Activated CD8-positive, alpha-beta T cell treated with anti-CD3 and anti-CD28 coated beads, Interleukin-2, amount 10 ng/mL, durations not matched to agents 7 days and 5 days (primary cell): ENCODE measurements at regions of chr9 and their contacts with region 1.

Region 1: DNA sequence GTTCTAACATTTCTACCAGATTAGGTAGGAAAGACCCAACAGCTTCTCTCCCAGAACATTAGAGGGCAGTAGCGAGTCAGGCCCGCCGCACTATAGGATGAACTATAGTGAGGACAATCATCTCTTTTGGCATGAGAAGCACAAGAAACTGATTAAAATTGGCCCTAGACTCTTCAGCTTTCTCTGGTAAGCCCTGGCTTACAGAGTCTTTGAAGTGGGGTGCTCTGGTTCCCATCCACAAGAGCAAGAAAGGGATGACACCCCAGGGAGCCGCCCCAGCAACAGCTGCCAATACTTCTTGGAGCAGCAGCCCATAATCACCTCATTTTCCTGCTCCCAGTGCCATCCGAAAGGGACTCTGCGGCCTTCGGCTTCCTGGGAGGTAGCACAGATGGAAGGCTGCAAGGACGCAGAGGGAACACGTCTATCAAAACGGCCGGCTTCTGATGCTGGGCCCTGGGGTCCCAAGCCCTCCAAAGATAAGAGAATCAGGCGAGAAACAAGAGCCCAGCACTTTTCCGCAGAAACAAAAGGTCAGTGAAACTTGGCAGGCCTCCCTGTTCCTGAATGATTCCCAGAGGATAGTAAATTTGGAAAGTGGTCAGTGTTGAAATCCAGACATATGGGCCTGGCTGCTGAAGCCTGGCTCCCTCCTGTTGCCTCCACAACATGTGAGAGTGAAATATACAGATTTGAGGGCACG is 69.3 kb downstream of the HSD17B3 start:
- DNase-seq: peak; percentile 45
- ATAC-seq: peak; percentile 73
- H3K4me3 Mint-ChIP-seq: no peak overlapping the region
- H3K27ac Mint-ChIP-seq: no peak overlapping the region
- H3K4me1 Mint-ChIP-seq: no peaks in the 10 kb centered on the region
- H3K27me3 Mint-ChIP-seq: peaks cover 54% of the 10 kb centered on the region

Region 2: DNA sequence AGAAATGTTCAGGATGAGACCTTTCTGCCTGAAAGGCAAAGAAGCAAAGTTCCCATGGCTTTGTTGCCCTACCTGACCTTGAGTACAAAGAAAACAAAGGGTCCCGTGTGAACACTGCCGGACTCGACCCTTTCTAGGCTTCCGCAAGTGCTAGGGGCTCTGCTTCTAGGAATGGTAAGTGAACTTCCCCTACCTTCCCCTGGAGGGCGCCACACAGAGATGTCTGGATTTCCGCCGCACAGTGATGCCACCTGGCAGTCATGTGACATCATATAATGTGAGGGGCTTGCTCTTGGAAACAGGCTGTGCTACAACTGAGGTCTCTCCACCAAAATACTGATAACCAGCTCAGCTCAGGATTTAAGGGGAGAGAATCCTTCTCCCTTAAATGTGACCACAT is 12.7 kb after region 1 on chr9:
- CTCF ChIA-PET with region 1: interaction called, 12 read pairs
- POLR2A ChIA-PET with region 1: no interaction called
- DNase-seq: no peak
- ATAC-seq: no peak
- H3K4me3 Mint-ChIP-seq: no peak overlapping the region
- H3K27ac Mint-ChIP-seq: no peak overlapping the region
- H3K4me1 Mint-ChIP-seq: peaks cover 14% of the 10 kb centered on the region
- H3K27me3 Mint-ChIP-seq: peaks cover 60% of the 10 kb centered on the region

Region 3: GRCh38 chr9:96266282-96267210 is 33.9 kb after region 1 on chr9:
- CTCF ChIA-PET with region 1: no interaction called
- POLR2A ChIA-PET with region 1: no interaction called
- DNase-seq: no peak
- ATAC-seq: no peak
- H3K4me3 Mint-ChIP-seq: no peak overlapping the region
- H3K27ac Mint-ChIP-seq: no peak overlapping the region
- H3K4me1 Mint-ChIP-seq: no peaks in the 10 kb centered on the region
- H3K27me3 Mint-ChIP-seq: peaks cover 23% of the 10 kb centered on the region

Region 4: DNA sequence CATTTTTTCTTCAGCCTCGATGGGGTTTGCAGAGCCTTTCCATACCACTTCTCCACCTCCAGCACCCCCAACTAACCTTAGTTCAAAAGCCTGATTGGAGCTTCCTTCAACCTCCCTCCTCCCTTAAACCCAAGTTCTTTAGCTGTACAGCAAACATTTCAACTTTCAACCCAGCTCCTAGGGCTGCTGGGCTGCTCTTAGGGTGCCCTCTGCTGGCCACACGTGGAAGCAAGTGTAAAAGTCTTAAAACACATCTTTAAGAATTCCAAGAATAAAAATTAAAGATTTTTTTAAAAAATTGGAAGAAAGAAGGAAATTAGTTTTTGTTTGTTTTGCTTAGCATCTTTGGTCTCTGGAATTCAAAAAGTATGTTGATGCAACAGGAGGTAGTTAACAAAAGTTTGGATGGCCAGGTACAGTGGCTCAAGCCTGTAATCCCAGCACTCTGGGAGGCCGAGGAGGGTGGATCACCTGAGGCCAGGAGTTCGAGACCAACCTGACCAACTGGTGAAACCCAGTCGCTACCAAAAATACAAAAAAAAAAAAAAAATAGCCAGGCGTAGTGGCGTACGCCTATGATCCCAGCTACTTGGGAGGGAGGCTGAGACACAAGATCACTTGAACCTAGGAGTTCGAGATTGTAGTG is 84.8 kb after region 1 on chr9:
- CTCF ChIA-PET with region 1: interaction called, 10 read pairs
- POLR2A ChIA-PET with region 1: no interaction called
- DNase-seq: peak; percentile 43
- ATAC-seq: peak; percentile 55
- H3K4me3 Mint-ChIP-seq: no peak overlapping the region
- H3K27ac Mint-ChIP-seq: no peak overlapping the region
- H3K4me1 Mint-ChIP-seq: no peaks in the 10 kb centered on the region
- H3K27me3 Mint-ChIP-seq: peaks cover 4% of the 10 kb centered on the region